ENCODE measurements at regions of chr19 and their contacts with region 1.

Region 1: DNA sequence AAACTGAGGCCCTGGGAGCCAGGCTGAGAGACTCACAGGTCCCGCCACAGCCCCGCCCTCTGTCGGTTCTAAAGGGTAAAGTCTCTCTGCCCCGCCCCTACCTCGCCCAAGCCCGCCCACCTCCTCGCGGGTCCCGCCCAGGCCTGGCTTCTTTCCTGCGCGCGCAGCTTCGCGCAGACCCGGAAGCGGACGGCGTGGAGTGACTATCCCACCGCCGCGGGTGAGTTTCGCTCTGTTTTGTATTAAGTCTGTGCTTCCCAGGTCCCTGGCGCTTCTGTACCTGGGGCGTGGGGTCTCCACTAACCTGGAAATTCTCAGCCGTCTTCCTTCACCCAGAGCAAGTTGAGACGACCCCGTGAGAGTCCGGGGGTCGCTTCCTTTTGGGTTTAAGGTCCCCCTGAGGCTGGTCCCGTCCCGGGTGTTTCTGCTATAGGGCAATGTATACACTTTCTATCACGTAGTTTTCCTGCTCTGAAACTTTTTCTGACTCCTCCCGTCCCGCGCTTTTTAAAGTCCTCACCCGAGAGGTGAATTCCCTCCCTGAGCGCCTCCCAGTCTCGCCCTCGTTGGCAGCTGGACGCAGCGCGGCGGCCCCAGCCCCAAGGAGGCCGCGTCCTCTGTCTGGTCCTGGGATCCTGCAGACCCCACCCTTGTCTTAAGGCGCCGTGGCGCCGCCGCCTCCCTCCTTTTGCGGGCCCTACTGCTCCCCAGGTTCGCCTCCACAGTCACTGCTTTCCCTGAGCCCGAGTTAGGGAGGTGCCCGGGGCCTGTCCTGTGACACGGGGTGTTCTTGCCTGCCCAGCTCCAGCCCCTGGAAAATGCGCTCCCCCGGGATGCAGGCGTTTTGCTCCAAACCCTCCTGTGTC is at the start of gene ZNF765:
- DNase-seq: peak; percentile 91
- H3K4me3 ChIP-seq: peak within 1 kb of the TSS; percentile 88 to 95 (median 93)
- H3K27ac ChIP-seq: peak within 1 kb of the TSS; percentile 71
- H3K4me1 ChIP-seq: peaks cover 5% of the 10 kb centered on the region
- H3K27me3 ChIP-seq: no peaks in the 10 kb centered on the region
- CTCF ChIP-seq: peak in 1 of 2 donors; percentile 66
- POLR2A ChIP-seq: peak; percentile 72
- total RNA-seq, gene ZNF765: 7.3 and 7.7 TPM in 2 replicates

Region 2: DNA sequence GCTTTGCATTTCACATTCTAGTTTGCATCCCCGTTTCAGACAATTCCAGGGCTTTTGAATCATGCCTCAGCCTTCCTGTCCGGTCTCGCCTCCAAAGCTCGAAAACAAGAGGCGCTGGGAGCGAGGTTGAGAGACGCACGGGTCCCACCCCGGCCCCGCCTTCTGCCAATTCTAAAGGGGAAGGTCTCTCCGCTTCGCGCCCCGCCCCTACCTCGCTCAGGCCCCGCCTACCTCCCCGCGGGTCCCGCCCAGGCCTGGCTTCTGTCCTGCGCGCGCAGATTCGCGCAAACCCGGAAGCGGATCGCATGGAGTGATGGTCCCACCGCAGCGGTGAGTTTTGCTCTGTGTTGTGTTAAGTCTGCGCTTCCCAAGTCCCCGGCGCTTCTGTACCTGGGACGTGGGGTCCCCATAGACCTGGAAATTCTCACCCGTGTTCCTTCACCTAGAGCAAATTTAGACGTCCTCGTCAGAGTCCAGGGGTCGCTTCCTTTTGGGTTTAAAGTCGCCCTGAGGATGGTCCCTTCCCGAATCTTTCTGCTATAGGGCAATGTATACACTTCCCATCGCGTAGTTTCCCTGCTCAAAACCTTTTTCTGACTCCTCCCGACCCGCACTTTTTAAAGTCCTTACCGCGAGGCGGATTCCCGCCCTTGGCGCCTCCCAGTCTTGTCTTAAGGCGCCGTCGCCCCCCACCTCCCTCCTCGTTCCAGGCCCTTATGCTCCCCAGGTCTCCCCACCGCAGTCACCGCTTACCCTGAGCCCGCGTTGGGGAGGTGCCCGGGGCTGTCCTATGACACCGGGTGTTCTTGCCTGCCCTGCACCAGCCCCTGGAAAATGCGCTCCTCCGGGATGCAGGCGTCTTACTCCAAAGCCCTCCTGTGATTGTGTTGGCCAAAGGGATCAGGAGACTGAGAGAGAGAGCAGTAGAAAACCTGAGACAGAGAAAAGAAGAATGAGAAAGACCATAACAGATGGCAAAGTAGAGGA is 61.5 kb before region 1 on chr19 and contains the start of gene ZNF845:
- CTCF ChIA-PET with region 1: no interaction called
- POLR2A ChIA-PET with region 1: no interaction called
- dilution Hi-C with region 1: no loop called
- intact Hi-C with region 1: loop called (anchors 2 kb)
- DNase-seq: peak; percentile 95
- H3K4me3 ChIP-seq: peak within 1 kb of the TSS; percentile 55 to 99 (median 98)
- H3K27ac ChIP-seq: peak within 1 kb of the TSS; percentile 84
- H3K4me1 ChIP-seq: peaks cover 2% of the 10 kb centered on the region
- H3K27me3 ChIP-seq: no peaks in the 10 kb centered on the region
- CTCF ChIP-seq: no peak
- POLR2A ChIP-seq: peak; percentile 62
- total RNA-seq, gene ZNF845: 4.6 and 5.0 TPM in 2 replicates

Region 3: GRCh38 chr19:53365134-53365898 is 29.9 kb before region 1 on chr19 and contains the start of gene ZNF525:
- CTCF ChIA-PET with region 1: no interaction called
- POLR2A ChIA-PET with region 1: no interaction called
- dilution Hi-C with region 1: no loop called
- intact Hi-C with region 1: loop called (anchors 2 kb)
- DNase-seq: peak; percentile 67
- H3K4me3 ChIP-seq: peak within 1 kb of the TSS; percentile 53 to 88 (median 56)
- H3K27ac ChIP-seq: no peak within 1 kb of the TSS
- H3K4me1 ChIP-seq: peaks cover 2% of the 10 kb centered on the region
- H3K27me3 ChIP-seq: no peaks in the 10 kb centered on the region
- CTCF ChIP-seq: peak in 1 of 2 donors; percentile 16
- POLR2A ChIP-seq: peak; percentile 43
- total RNA-seq, gene ZNF525: 3.7 and 3.8 TPM in 2 replicates

Region 4: GRCh38 chr19:53381379-53381778 is 13.8 kb before region 1 on chr19:
- CTCF ChIA-PET with region 1: no interaction called
- POLR2A ChIA-PET with region 1: no interaction called
- dilution Hi-C with region 1: no loop called
- intact Hi-C with region 1: no loop called
- DNase-seq: no peak
- H3K4me3 ChIP-seq: no peak overlapping the region
- H3K27ac ChIP-seq: no peak overlapping the region
- H3K4me1 ChIP-seq: no peaks in the 10 kb centered on the region
- H3K27me3 ChIP-seq: no peaks in the 10 kb centered on the region
- CTCF ChIP-seq: no peak
- POLR2A ChIP-seq: no peak

Region 5: GRCh38 chr19:53424968-53425597 is 29.9 kb after region 1 on chr19:
- CTCF ChIA-PET with region 1: interaction called, 10 read pairs
- POLR2A ChIA-PET with region 1: no interaction called
- dilution Hi-C with region 1: no loop called
- intact Hi-C with region 1: loop called (anchors 5 kb)
- DNase-seq: peak; percentile 58
- H3K4me3 ChIP-seq: no peak overlapping the region
- H3K27ac ChIP-seq: no peak overlapping the region
- H3K4me1 ChIP-seq: no peaks in the 10 kb centered on the region
- H3K27me3 ChIP-seq: no peaks in the 10 kb centered on the region
- CTCF ChIP-seq: peak; percentile 71 to 89
- POLR2A ChIP-seq: no peak

Region 6: GRCh38 chr19:53431399-53432087 is 36.3 kb after region 1 on chr19 and contains the start of gene ZNF761:
- CTCF ChIA-PET with region 1: no interaction called
- POLR2A ChIA-PET with region 1: no interaction called
- dilution Hi-C with region 1: no loop called
- intact Hi-C with region 1: loop called (anchors 5 kb)
- DNase-seq: peak; percentile 96
- H3K4me3 ChIP-seq: peak within 1 kb of the TSS; percentile 74 to 98 (median 98)
- H3K27ac ChIP-seq: peak within 1 kb of the TSS; percentile 80
- H3K4me1 ChIP-seq: peaks cover 14% of the 10 kb centered on the region
- H3K27me3 ChIP-seq: no peaks in the 10 kb centered on the region
- CTCF ChIP-seq: peak in 1 of 2 donors; percentile 59
- POLR2A ChIP-seq: peak; percentile 83
- total RNA-seq, gene ZNF761: 7.3 and 8.8 TPM in 2 replicates

Region 7: GRCh38 chr19:53467485-53468262 is 72.5 kb after region 1 on chr19 and contains the start of gene ZNF813:
- CTCF ChIA-PET with region 1: no interaction called
- POLR2A ChIA-PET with region 1: no interaction called
- dilution Hi-C with region 1: no loop called
- intact Hi-C with region 1: loop called (anchors 2 kb)
- DNase-seq: peak; percentile 89
- H3K4me3 ChIP-seq: peak within 1 kb of the TSS; percentile 68 to 86 (median 81)
- H3K27ac ChIP-seq: peak within 1 kb of the TSS; percentile 69
- H3K4me1 ChIP-seq: peaks cover 4% of the 10 kb centered on the region
- H3K27me3 ChIP-seq: no peaks in the 10 kb centered on the region
- CTCF ChIP-seq: no peak
- POLR2A ChIP-seq: peak; percentile 71
- total RNA-seq, gene ZNF813: 2.3 TPM in 2 replicates